ENCODE measurements at regions of chr14 and their contacts with region 1.

Region 1: GRCh38 chr14:68816262-68816942 is 23.5 kb upstream of the ZFP36L1 start:
- H3K4me3 Mint-ChIP-seq: peak overlapping the region; percentile 71
- H3K27ac Mint-ChIP-seq: peak overlapping the region; percentile 95
- H3K4me1 Mint-ChIP-seq: peaks cover 49% of the 10 kb centered on the region
- H3K27me3 Mint-ChIP-seq: no peaks in the 10 kb centered on the region

Region 2: DNA sequence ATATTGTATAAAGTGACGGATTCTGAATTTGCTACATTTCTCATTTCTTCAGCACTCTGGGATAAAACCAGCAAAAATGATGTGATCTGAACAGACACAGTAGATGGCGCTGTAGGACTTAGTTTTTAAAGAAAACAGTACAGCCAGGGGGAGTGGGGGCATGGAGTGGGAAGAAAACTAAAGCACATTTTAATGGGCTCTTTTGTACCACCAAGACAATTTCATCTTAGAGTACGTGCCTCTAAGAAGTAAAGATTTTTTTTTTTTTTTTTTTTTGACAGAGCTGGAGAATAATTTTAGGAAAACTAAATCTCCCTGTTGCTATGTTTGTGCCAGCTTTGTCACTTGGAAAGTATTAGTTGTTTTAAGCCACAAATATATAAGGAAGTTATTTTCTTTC is 872.5 kb before region 1 on chr14:
- intact Hi-C with region 1: loop called (anchors 2 kb)
- H3K4me3 Mint-ChIP-seq: no peak overlapping the region
- H3K27ac Mint-ChIP-seq: no peak overlapping the region
- H3K4me1 Mint-ChIP-seq: peaks cover 20% of the 10 kb centered on the region
- H3K27me3 Mint-ChIP-seq: no peaks in the 10 kb centered on the region

Region 3: GRCh38 chr14:68598621-68599447 is 217.6 kb before region 1 on chr14:
- intact Hi-C with region 1: no loop called
- H3K4me3 Mint-ChIP-seq: peak overlapping the region; percentile 70
- H3K27ac Mint-ChIP-seq: peak overlapping the region; percentile 96
- H3K4me1 Mint-ChIP-seq: peaks cover 70% of the 10 kb centered on the region
- H3K27me3 Mint-ChIP-seq: no peaks in the 10 kb centered on the region